A673 (cell line): ENCODE measurements at regions of chr1 and their contacts with region 1.

Region 1: DNA sequence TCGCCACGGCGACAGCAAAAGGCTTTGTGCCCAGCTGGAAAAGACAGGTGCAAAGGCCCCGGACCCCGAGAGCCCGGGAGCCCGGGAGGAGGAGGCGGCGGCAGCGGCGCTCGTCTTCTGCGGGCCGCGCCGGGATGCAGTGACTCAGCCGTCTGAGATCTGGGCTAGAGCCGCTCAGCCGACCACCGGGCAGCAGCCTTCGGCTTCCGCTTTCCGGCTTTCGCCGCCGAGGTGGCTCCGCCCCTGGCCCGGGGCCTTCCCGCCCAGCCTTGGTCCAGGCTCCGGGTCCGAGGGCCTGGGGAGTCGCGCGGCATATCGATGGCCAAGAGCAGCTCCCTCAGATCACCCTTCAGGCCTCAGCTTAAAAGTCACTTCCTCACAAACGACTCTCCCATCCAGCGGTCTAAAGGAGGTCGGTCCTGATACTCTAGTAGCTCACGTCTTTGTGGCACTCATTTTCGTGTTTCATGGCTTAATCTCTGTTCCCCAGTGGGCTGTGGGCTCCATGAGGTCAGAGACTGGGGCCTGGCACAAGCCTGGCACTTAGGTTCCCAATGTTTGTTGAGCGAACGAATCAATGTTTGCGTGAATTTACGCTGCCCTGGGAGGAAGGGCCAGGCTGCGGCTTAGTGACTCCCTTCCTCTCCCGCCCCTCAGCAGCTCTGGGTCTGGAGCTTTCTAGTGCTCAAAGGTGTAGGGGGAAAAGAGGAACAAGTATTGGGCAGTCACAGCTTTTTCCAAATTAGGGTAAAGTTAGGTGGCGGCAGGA is at the start of gene PHTF1:
- DNase-seq: peak; percentile 64
- H3K4me3 ChIP-seq: peak within 1 kb of the TSS; percentile 93
- H3K27ac ChIP-seq: peak within 1 kb of the TSS; percentile 86
- H3K4me1 ChIP-seq: peaks cover 23% of the 10 kb centered on the region
- H3K27me3 ChIP-seq: no peaks in the 10 kb centered on the region
- CTCF ChIP-seq: no peak
- total RNA-seq, gene PHTF1: 57.2 and 59.2 TPM in 2 replicates

Region 2: GRCh38 chr1:113811888-113812660 is 52.6 kb after region 1 on chr1 and contains the start of gene RSBN1:
- CTCF ChIA-PET with region 1: no interaction called
- POLR2A ChIA-PET with region 1: no interaction called
- intact Hi-C with region 1: loop called (anchors 5 kb)
- DNase-seq: peak; percentile 100
- H3K4me3 ChIP-seq: peak within 1 kb of the TSS; percentile 87
- H3K27ac ChIP-seq: peak within 1 kb of the TSS; percentile 73
- H3K4me1 ChIP-seq: peaks cover 17% of the 10 kb centered on the region
- H3K27me3 ChIP-seq: no peaks in the 10 kb centered on the region
- CTCF ChIP-seq: no peak
- total RNA-seq, gene RSBN1: 18.3 and 18.7 TPM in 2 replicates

Region 3: DNA sequence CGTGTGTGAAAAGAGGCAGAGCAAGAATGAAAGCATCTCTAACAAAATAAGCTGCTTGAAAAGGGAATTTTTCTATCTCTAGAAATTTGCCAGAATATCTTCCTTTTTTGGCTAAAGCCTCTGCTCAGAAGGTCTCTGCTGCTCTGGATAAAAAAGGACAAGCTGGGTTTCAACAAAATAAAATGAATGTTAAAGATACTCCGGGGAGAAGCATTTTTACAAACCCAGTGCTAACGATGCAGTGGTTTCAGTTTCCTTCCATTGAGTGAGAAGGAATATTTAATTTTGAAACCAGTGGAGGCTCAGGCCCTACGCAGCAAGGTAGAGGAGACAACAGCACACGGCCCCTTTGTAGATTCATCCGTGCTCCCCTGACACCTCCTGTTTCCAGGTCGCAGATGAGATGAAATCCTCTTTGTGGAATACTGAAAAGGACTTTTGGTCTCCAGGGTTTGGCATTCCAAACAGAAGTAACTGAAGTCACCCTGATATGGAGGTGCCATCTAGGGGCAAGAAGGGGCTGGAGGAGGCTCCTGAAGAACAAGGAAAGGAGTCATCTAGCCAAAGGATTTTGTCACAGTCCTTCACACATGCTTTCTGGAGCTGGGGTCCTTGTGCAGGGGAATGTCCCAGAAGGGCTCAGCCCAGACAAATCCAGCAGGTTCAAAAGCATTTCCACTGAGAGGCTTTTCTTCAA is 459.8 kb after region 1 on chr1:
- CTCF ChIA-PET with region 1: interaction called, 11 read pairs
- POLR2A ChIA-PET with region 1: no interaction called
- intact Hi-C with region 1: no loop called
- DNase-seq: peak; percentile 66
- H3K4me3 ChIP-seq: peak overlapping the region; percentile 5
- H3K27ac ChIP-seq: peak overlapping the region; percentile 39
- H3K4me1 ChIP-seq: peaks cover 30% of the 10 kb centered on the region
- H3K27me3 ChIP-seq: no peaks in the 10 kb centered on the region
- CTCF ChIP-seq: peak; percentile 57

Region 4: GRCh38 chr1:114780344-114781226 is 1021.1 kb after region 1 on chr1 and contains the start of gene SIKE1:
- CTCF ChIA-PET with region 1: no interaction called
- POLR2A ChIA-PET with region 1: interaction called, 18 read pairs
- intact Hi-C with region 1: no loop called
- DNase-seq: peak; percentile 95
- H3K4me3 ChIP-seq: peak within 1 kb of the TSS; percentile 66
- H3K27ac ChIP-seq: peak within 1 kb of the TSS; percentile 82
- H3K4me1 ChIP-seq: no peaks in the 10 kb centered on the region
- H3K27me3 ChIP-seq: no peaks in the 10 kb centered on the region
- CTCF ChIP-seq: no peak
- total RNA-seq, gene SIKE1: 62.4 and 68.3 TPM in 2 replicates